CD8-positive, alpha-beta T cell (primary cell): ENCODE measurements at regions of chrX and their contacts with region 1.

Region 1: DNA sequence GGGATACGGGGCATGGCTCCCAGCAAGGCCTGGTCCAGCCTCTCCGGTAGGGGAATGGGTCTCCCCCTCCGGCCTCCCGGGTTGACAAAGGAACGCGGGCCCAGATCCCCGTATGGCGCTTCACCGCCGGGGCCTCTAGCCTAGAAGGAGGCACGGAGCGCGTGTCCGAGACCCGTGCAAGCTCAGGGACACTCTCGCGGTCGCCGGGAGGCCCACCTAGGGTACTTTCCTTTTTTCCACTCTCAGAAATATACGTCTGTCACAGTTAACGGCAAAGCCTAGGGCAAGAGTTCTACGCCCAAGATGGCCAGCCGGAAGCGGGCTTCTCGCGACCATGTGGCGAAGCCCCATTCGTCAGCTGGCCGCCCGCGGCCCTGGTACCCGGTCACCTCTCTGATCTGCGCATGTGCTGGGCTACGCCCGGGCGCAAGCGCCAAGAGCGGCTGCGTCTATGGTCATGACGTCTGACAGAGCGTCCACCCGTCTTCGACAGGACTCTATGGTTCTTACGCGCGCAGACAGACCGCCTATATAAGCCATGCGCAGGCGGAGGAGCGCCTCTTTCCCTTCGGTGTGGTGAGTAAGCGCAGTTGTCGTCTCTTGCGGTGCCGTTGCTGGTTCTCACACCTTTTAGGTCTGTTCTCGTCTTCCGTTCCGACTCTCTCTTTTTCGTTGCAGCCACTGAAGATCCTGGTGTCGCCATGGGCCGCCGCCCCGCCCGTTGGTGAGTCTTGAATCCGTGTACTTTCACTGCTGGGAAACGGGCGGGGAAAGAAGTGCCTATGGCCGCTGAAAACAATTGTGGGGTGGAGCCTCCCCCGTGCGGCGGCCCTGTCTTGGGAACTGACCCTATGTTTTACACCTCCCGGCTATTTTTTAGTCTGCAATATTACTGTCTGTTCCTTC is at the start of gene RPL10:
- DNase-seq: peak; percentile 78 to 96 (median 87)
- ATAC-seq: peak; percentile 82
- H3K4me3 ChIP-seq: peak within 1 kb of the TSS; percentile 86 to 95
- H3K4me3 Mint-ChIP-seq: peak within 1 kb of the TSS; percentile 96
- H3K27ac ChIP-seq: peak within 1 kb of the TSS; percentile 99
- H3K27ac Mint-ChIP-seq: peak within 1 kb of the TSS; percentile 99
- H3K4me1 ChIP-seq: peaks cover 15% of the 10 kb centered on the region
- H3K4me1 Mint-ChIP-seq: peaks cover 25% of the 10 kb centered on the region
- H3K27me3 ChIP-seq: no peaks in the 10 kb centered on the region
- H3K27me3 Mint-ChIP-seq: no peaks in the 10 kb centered on the region
- CTCF ChIP-seq: no peak
- total RNA-seq, gene RPL10: 6,105 to 6,263 TPM

Region 2: DNA sequence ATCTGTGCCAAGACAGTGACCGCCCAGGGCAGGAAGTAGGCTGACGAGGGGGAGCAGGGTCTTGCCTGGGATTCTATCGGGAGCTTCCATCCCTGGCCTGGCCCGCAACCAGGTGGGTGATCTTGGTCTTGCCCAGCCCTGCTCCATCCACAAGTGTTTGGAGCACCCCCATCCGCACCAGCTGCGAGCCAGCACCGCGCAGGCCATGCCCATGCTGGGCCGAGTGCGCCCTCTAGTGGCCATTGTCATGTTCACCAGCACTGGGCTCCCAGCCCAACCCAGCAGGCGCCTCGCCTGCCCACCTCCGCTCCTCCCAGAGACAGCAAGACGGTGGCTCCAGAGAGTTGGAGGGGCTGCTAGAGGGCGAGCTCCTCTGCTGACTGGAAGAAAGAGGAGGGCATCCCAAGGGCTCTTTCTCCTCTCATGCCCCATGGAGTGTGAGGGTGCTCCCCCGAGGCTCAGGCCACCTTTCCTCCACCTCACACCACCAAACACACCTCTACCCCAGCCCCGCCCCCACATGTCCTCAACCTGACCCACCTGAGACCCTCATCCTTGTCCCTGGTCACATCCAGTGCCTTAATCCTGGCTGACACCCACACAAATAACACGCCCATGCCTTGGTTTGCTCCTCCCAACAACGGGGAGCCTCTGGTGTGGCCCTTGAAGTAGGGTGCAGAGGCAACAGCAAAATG is 890.4 kb before region 1 on chrX:
- CTCF ChIA-PET with region 1: no interaction called
- POLR2A ChIA-PET with region 1: no interaction called
- intact Hi-C with region 1: no loop called
- DNase-seq: peak; percentile 68 to 92 (median 82)
- ATAC-seq: peak; percentile 99
- H3K4me3 ChIP-seq: no peak overlapping the region
- H3K4me3 Mint-ChIP-seq: no peak overlapping the region
- H3K27ac ChIP-seq: no peak overlapping the region
- H3K27ac Mint-ChIP-seq: no peak overlapping the region
- H3K4me1 ChIP-seq: peaks cover 5% of the 10 kb centered on the region
- H3K4me1 Mint-ChIP-seq: no peaks in the 10 kb centered on the region
- H3K27me3 ChIP-seq: no peaks in the 10 kb centered on the region
- H3K27me3 Mint-ChIP-seq: no peaks in the 10 kb centered on the region
- CTCF ChIP-seq: peak; percentile 62

Region 3: GRCh38 chrX:154051201-154051810 is 346.8 kb before region 1 on chrX:
- CTCF ChIA-PET with region 1: no interaction called
- POLR2A ChIA-PET with region 1: no interaction called
- intact Hi-C with region 1: no loop called
- DNase-seq: peak; percentile 43 to 80 (median 70)
- ATAC-seq: peak; percentile 85
- H3K4me3 ChIP-seq: no peak overlapping the region
- H3K4me3 Mint-ChIP-seq: no peak overlapping the region
- H3K27ac ChIP-seq: peak overlapping the region in 1 of 2 experiments; percentile 25
- H3K27ac Mint-ChIP-seq: peak overlapping the region; percentile 62
- H3K4me1 ChIP-seq: peaks cover 18% of the 10 kb centered on the region
- H3K4me1 Mint-ChIP-seq: peaks cover 41% of the 10 kb centered on the region
- H3K27me3 ChIP-seq: no peaks in the 10 kb centered on the region
- H3K27me3 Mint-ChIP-seq: no peaks in the 10 kb centered on the region
- CTCF ChIP-seq: peak; percentile 55

Region 4: DNA sequence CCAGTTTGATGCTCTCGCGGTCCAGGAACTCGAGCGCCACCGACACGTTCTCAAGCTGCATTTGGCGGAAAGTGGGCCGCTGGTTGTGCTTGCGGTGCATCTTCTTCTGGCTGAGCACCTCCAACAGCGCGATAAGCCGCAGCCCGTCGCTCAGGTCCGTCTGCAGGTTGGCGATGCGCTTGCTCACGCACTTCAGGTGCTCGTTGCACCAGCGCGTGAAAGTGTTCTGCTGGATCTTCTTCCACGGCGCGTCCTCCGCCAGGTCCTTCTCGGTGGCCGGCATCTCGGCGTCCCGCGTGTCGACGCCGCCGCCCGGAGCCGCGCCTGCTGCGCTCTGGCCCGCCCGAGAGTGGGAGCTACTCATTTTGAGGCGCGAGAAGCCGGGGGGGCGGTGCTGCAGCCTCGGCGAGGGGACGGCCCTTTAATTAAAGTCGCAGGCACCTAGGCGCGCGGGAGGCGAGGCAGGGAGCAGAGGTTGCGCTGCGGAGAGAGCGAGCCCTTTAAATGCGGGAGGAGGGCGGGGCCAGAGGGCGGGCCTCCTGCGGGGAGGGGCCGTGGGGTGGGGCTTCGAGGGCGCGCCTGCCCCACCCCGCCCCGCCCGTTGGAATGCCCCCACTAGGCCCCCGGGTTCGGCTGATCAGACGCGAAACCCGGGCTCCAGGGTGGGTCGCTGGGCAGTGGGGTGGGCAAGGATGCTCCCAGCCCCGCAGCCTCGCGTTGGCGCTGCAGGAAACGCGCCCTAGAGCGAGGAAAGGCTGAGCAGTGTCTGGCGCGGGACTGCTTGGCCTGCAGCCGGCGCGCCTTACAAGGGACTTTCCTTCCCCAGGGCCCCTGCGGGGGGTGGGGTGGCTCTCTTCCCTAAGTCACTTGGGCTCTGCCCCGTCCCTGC is 26.9 kb before region 1 on chrX:
- CTCF ChIA-PET with region 1: interaction called, 3 read pairs
- POLR2A ChIA-PET with region 1: interaction called, 23 read pairs
- intact Hi-C with region 1: no loop called
- DNase-seq: peak; percentile 83 to 95 (median 91)
- ATAC-seq: peak; percentile 59
- H3K4me3 ChIP-seq: peak overlapping the region; percentile 81 to 89
- H3K4me3 Mint-ChIP-seq: peak overlapping the region; percentile 83
- H3K27ac ChIP-seq: peak overlapping the region; percentile 65 to 95
- H3K27ac Mint-ChIP-seq: peak overlapping the region; percentile 83
- H3K4me1 ChIP-seq: peaks cover 48% of the 10 kb centered on the region
- H3K4me1 Mint-ChIP-seq: peaks cover 21% of the 10 kb centered on the region
- H3K27me3 ChIP-seq: no peaks in the 10 kb centered on the region
- H3K27me3 Mint-ChIP-seq: no peaks in the 10 kb centered on the region
- CTCF ChIP-seq: no peak

Region 5: DNA sequence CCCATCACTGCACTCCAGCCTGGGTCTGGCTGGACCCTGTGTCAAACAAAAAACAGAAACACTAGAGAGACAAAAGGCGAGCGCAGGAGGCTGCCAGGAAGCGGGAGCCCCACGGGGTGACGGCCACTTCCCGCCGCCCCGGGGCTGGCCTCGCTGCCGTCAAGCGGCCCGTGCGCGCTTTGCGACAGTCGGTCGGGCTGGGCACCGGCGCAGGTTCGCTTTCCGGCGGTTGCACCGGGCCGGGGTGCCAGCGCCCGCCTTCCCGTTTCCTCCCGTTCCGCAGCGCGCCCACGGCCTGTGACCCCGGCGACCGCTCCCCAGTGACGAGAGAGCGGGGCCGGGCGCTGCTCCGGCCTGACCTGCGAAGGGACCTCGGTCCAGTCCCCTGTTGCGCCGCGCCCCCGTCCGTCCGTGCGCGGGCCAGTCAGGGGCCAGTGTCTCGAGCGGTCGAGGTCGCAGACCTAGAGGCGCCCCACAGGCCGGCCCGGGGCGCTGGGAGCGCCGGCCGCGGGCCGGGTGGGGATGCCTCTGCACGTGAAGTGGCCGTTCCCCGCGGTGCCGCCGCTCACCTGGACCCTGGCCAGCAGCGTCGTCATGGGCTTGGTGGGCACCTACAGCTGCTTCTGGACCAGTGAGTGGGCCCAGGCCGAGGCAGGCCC is 13.4 kb after region 1 on chrX and contains the start of gene TAFAZZIN:
- CTCF ChIA-PET with region 1: interaction called, 12 read pairs
- POLR2A ChIA-PET with region 1: interaction called, 50 read pairs
- intact Hi-C with region 1: no loop called
- DNase-seq: peak; percentile 37 to 87 (median 70)
- ATAC-seq: peak; percentile 79
- H3K4me3 ChIP-seq: peak within 1 kb of the TSS; percentile 49 to 68
- H3K4me3 Mint-ChIP-seq: peak within 1 kb of the TSS; percentile 91
- H3K27ac ChIP-seq: peak within 1 kb of the TSS; percentile 55 to 73
- H3K27ac Mint-ChIP-seq: peak within 1 kb of the TSS; percentile 94
- H3K4me1 ChIP-seq: peaks cover 9% of the 10 kb centered on the region
- H3K4me1 Mint-ChIP-seq: peaks cover 6% of the 10 kb centered on the region
- H3K27me3 ChIP-seq: no peaks in the 10 kb centered on the region
- H3K27me3 Mint-ChIP-seq: no peaks in the 10 kb centered on the region
- CTCF ChIP-seq: no peak
- total RNA-seq, gene TAFAZZIN: 48.9 to 52.3 TPM

Region 6: GRCh38 chrX:154443992-154444754 is 46.1 kb after region 1 on chrX and contains the start of gene FAM50A:
- CTCF ChIA-PET with region 1: interaction called, 3 read pairs
- POLR2A ChIA-PET with region 1: interaction called, 3 read pairs
- intact Hi-C with region 1: loop called in 1 of 2 experiments (anchors 10 kb)
- DNase-seq: peak; percentile 29 to 86 (median 66)
- ATAC-seq: peak; percentile 79
- H3K4me3 ChIP-seq: peak within 1 kb of the TSS; percentile 50 to 54
- H3K4me3 Mint-ChIP-seq: peak within 1 kb of the TSS; percentile 77
- H3K27ac ChIP-seq: peak within 1 kb of the TSS; percentile 42 to 74
- H3K27ac Mint-ChIP-seq: peak within 1 kb of the TSS; percentile 87
- H3K4me1 ChIP-seq: peaks cover 17% of the 10 kb centered on the region
- H3K4me1 Mint-ChIP-seq: peaks cover 20% of the 10 kb centered on the region
- H3K27me3 ChIP-seq: no peaks in the 10 kb centered on the region
- H3K27me3 Mint-ChIP-seq: no peaks in the 10 kb centered on the region
- CTCF ChIP-seq: no peak
- total RNA-seq, gene FAM50A: 39.6 to 40.4 TPM

Region 7: GRCh38 chrX:154490414-154491083 is 92.5 kb after region 1 on chrX and contains the start of gene SLC10A3:
- CTCF ChIA-PET with region 1: interaction called, 9 read pairs
- POLR2A ChIA-PET with region 1: interaction called, 27 read pairs
- intact Hi-C with region 1: loop called in 1 of 2 experiments (anchors 10 kb)
- DNase-seq: peak; percentile 77 to 94 (median 85)
- ATAC-seq: peak; percentile 79
- H3K4me3 ChIP-seq: peak within 1 kb of the TSS; percentile 60 to 71
- H3K4me3 Mint-ChIP-seq: peak within 1 kb of the TSS; percentile 85
- H3K27ac ChIP-seq: peak within 1 kb of the TSS; percentile 84 to 94
- H3K27ac Mint-ChIP-seq: peak within 1 kb of the TSS; percentile 94
- H3K4me1 ChIP-seq: peaks cover 19% of the 10 kb centered on the region
- H3K4me1 Mint-ChIP-seq: peaks cover 24% of the 10 kb centered on the region
- H3K27me3 ChIP-seq: no peaks in the 10 kb centered on the region
- H3K27me3 Mint-ChIP-seq: no peaks in the 10 kb centered on the region
- CTCF ChIP-seq: no peak
- total RNA-seq, gene SLC10A3: 22.3 to 23.0 TPM

Region 8: DNA sequence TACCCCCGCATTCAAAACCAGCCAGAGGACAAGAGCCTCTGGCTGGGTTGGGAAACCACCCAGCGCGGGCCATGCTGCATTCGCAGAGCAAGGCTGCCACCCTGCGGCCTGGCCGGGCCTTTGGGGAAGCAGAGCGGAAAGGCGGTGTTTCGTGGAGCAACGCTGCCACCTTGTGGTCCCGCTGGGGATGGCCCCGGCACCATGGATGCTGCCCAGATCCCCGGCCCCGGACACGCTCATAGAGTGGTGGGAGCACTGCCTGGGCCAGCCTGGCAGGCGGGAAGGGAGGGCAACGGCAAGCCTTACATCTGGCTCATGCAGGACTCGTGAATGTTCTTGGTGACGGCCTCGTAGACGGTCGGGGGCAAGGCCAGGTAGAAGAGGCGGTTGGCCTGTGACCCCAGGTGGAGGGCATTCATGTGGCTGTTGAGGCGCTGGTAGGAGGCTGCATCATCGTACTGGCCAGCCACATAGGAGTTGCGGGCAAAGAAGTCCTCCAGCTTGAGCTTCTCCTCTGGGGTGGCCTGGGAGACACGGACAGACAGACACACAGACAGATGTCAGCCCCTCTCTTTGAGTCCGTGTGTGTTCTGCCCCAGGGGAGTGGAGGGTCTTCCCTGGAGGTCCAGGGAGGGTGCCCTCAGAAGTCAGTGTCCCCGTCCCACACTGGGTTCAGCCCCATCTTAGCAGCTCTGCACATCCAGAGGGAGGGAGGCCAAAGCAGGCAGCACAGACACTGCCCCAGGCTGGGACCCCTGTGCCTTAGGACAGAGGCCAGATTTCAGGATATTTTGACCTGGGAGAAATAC is 137.0 kb after region 1 on chrX:
- CTCF ChIA-PET with region 1: interaction called, 11 read pairs
- POLR2A ChIA-PET with region 1: interaction called, 5 read pairs
- intact Hi-C with region 1: no loop called
- DNase-seq: peak; percentile 72 to 97 (median 87)
- ATAC-seq: peak; percentile 98
- H3K4me3 ChIP-seq: no peak overlapping the region
- H3K4me3 Mint-ChIP-seq: no peak overlapping the region
- H3K27ac ChIP-seq: no peak overlapping the region
- H3K27ac Mint-ChIP-seq: no peak overlapping the region
- H3K4me1 ChIP-seq: peaks cover 4% of the 10 kb centered on the region
- H3K4me1 Mint-ChIP-seq: peaks cover 10% of the 10 kb centered on the region
- H3K27me3 ChIP-seq: no peaks in the 10 kb centered on the region
- H3K27me3 Mint-ChIP-seq: no peaks in the 10 kb centered on the region
- CTCF ChIP-seq: peak; percentile 85